Activated CD4-positive, alpha-beta memory T cell treated with anti-CD3 and anti-CD28 coated beads, Interleukin-2, amount 10 ng/mL, durations not matched to agents 7 days and 5 days (primary cell): ENCODE measurements at regions of chr6 and their contacts with region 1.

Region 1: GRCh38 chr6:26568601-26569432 is 27.9 kb upstream of the ABT1 start:
- DNase-seq: peak; percentile 98
- H3K4me3 Mint-ChIP-seq: peak overlapping the region; percentile 92
- H3K27ac Mint-ChIP-seq: peak overlapping the region; percentile 87
- H3K4me1 Mint-ChIP-seq: peaks cover 29% of the 10 kb centered on the region
- H3K27me3 Mint-ChIP-seq: peaks cover 11% of the 10 kb centered on the region

Region 2: DNA sequence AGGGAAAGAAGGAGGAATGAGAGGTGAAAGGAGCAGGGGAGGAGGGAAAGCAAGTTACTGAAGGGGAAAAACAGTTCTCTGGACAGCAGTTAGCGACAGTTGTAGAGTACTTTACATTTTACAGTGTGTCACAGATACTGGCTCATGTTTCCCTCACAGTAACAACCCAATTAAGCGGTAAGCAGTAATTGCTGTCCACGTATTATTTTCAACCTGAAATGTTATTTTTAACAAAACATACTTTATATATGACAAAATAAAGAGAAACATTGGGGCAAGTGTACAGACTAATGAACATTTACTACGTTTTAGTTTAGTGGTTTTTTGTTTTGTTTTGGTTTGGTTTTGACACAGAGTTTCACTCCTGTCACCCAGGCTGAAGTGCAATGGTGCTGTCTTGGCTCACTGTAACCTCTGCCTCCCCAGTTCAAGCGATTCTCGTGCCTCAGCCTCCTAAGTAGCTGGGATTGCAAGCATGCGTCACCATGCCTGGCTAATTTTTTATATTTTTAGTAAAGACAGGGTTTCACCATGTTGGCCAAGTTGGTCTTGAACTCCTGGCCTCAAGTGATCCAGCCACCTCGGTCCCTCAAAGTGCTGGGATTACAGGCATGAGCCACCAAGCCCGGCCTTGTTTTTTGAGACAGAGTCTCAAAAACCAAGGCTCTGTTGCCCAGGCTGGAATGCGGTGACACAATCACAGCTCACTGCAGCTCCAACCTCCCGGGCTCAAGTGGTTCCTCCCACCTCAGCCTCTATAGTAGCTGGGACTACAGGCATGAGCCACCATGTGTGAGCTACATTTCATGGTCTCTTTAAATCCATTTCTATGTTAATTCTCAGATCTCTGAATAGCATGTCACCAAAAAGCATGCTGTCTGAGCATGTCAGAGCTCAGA is 226.5 kb before region 1 on chr6:
- CTCF ChIA-PET with region 1: interaction called, 44 read pairs
- POLR2A ChIA-PET with region 1: interaction called, 4 read pairs
- DNase-seq: peak; percentile 39
- H3K4me3 Mint-ChIP-seq: peak overlapping the region; percentile 80
- H3K27ac Mint-ChIP-seq: peak overlapping the region; percentile 56
- H3K4me1 Mint-ChIP-seq: peaks cover 33% of the 10 kb centered on the region
- H3K27me3 Mint-ChIP-seq: peaks cover 15% of the 10 kb centered on the region

Region 3: GRCh38 chr6:26363882-26364701 is 204.7 kb before region 1 on chr6:
- CTCF ChIA-PET with region 1: no interaction called
- POLR2A ChIA-PET with region 1: no interaction called
- DNase-seq: no peak
- H3K4me3 Mint-ChIP-seq: no peak overlapping the region
- H3K27ac Mint-ChIP-seq: no peak overlapping the region
- H3K4me1 Mint-ChIP-seq: peaks cover 57% of the 10 kb centered on the region
- H3K27me3 Mint-ChIP-seq: no peaks in the 10 kb centered on the region

Region 4: DNA sequence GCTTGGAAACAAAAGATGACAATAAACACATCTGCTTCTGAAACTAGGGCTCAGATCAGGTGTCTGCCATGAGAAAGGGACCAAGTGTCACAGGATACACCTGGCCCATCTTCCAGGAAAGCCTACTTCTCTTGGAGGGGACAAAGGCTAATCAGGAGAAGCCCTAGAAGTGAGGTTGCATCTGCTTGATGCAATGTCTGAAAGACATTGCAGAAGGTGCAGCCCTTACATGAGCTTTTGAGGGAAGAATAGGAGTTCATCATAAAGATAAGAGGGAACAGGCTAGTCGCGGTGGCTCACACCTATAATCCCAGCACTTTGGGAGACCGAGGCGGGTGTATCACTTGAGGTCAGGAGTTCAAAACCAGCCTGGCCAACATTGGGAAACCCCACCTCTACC is 71.2 kb before region 1 on chr6:
- CTCF ChIA-PET with region 1: no interaction called
- POLR2A ChIA-PET with region 1: no interaction called
- DNase-seq: no peak
- H3K4me3 Mint-ChIP-seq: no peak overlapping the region
- H3K27ac Mint-ChIP-seq: no peak overlapping the region
- H3K4me1 Mint-ChIP-seq: peaks cover 40% of the 10 kb centered on the region
- H3K27me3 Mint-ChIP-seq: peaks cover 28% of the 10 kb centered on the region

Region 5: DNA sequence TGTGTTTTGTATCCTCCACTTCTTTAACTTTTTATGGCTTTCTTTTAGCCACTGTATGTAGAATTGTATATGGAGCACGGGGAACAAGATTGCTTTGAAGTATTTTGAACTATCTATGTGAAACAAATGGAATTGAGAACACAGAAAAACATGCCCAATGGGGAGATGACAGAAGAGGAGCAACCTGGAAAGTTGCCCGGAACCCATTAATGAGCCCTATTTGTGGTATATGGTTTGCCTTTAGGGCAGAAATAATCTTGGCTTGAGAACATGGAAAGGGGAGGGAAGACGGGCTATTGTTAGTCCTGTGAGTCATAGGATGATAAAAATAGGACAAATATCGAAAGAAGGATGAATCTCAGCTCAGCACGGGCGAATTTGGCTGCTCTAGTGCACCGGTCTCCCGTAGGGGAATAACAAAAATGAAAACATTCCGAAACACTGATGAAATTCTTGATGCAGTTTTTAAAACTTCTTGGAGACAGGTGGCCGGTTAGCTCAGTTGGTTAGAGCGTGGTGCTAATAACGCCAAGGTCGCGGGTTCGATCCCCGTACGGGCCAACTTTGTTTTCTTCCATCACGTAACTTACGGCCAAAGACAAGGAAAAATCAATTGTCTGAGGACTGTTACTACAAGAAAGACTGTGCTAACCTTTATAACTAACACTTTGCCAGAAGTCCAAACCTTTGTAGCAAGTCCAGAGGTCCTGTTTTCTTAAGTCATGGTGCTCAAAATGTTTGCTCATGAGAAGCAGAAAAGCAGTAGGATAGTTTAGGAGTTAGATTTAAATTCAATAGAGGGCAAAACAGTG is 15.0 kb before region 1 on chr6:
- CTCF ChIA-PET with region 1: interaction called, 11 read pairs
- POLR2A ChIA-PET with region 1: interaction called, 9 read pairs
- DNase-seq: peak; percentile 85
- H3K4me3 Mint-ChIP-seq: no peak overlapping the region
- H3K27ac Mint-ChIP-seq: no peak overlapping the region
- H3K4me1 Mint-ChIP-seq: peaks cover 26% of the 10 kb centered on the region
- H3K27me3 Mint-ChIP-seq: no peaks in the 10 kb centered on the region

Region 6: GRCh38 chr6:26659042-26659999 is 90.5 kb after region 1 on chr6 and contains the start of gene ZNF322:
- CTCF ChIA-PET with region 1: no interaction called
- POLR2A ChIA-PET with region 1: no interaction called
- DNase-seq: peak; percentile 90
- H3K4me3 Mint-ChIP-seq: peak within 1 kb of the TSS; percentile 75
- H3K27ac Mint-ChIP-seq: peak within 1 kb of the TSS; percentile 23
- H3K4me1 Mint-ChIP-seq: peaks cover 15% of the 10 kb centered on the region
- H3K27me3 Mint-ChIP-seq: peaks cover 21% of the 10 kb centered on the region
- total RNA-seq, gene ZNF322: 10.3 to 12.3 TPM